ENCODE measurements at regions of chr12 and their contacts with region 1.

Region 1: DNA sequence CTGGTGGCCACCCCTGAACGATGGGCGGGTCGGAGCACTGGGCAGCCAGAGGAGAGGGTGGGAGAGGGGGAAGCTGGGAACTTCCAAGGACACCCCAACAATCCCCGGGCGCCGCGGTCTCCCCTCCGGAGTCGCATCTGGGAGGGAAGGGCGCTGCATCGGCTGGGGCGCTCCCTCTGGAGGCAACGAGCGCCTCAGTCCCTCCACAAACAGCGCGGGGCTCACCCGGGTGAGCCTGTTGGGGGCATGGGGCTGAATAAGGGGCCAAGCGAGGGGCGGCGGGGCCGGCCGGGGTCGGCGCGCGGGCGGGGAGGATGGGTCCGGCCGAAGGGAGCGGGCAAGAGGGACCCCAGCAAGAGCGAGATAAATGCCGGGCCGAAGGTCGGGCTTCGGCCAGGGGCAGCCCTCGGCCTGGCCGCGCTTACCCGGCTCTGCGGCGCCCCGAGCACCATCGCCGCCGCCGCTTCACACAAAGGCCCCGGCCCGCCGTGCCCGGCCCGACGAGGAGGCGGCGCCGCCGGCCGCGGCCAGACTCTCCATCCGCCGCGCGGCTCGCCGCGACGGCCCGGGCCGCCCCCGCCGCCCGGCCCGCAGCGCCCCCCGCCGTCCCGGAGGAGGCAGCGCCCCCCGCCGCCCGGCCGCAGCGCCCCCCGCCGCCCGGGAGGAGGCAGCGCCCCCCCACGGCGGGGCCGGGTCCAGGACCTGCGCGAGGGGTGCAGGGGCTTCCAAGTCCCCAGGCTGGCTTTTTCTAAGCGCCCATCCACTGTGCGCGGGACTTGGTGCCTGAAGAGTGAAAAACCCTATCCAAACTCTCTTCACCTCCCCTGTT is at the start of gene ZBTB39:
- H3K4me3 Mint-ChIP-seq: peak within 1 kb of the TSS; percentile 85
- H3K27ac Mint-ChIP-seq: peak within 1 kb of the TSS; percentile 89
- H3K4me1 Mint-ChIP-seq: peaks cover 49% of the 10 kb centered on the region
- H3K27me3 Mint-ChIP-seq: no peaks in the 10 kb centered on the region

Region 2: DNA sequence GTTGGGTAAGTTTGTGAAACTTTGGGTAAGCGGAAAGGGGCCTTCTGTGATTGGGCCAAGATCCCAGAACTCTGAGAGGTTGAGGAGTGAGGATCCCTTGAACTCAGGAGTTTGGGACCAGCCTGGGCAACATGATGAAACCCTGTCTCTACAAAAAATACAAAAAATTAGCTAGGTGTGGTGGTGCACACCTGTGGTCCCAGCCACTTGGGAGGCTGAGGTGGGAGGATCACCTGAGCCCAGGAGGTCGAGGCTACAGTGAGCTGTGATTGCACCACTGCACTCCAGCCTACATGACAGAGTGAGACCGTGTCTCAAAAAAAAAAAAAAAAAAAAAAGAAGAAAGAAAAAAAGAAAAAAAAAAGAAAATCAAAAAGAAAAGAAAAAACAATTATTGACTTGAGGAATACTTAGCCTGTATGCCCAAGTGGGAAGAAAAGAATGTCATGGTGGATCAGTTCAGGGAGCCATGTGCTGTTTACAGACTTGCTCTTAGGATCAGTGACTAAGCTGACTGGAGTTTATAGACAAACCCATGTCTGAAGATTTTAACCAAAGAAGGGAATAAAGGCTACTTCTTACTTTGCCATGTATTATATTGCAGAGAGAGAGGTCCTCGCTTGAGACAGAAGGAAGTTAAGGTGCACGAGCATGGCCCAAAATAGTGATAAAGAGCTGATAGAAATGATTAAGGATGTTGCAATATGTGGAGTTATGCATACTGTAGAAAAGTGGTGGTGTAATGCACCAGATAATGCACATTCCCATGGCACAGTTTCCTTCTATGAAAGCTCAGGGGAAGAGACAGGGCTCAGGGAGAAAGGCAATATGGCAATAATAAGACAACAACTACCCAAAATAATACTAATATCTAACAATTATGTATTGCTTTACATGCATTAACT is 242.2 kb before region 1 on chr12:
- intact Hi-C with region 1: loop called (anchors 1 kb)
- H3K4me3 Mint-ChIP-seq: no peak overlapping the region
- H3K27ac Mint-ChIP-seq: no peak overlapping the region
- H3K4me1 Mint-ChIP-seq: peaks cover 38% of the 10 kb centered on the region
- H3K27me3 Mint-ChIP-seq: peaks cover 3% of the 10 kb centered on the region

Region 3: GRCh38 chr12:56839915-56840325 is 166.3 kb before region 1 on chr12:
- intact Hi-C with region 1: loop called (anchors 1 kb)
- H3K4me3 Mint-ChIP-seq: no peak overlapping the region
- H3K27ac Mint-ChIP-seq: no peak overlapping the region
- H3K4me1 Mint-ChIP-seq: peaks cover 12% of the 10 kb centered on the region
- H3K27me3 Mint-ChIP-seq: peaks cover 19% of the 10 kb centered on the region

Region 4: GRCh38 chr12:57046947-57047890 is 41.0 kb after region 1 on chr12:
- intact Hi-C with region 1: loop called (anchors 5 kb)
- H3K4me3 Mint-ChIP-seq: peak overlapping the region; percentile 44
- H3K27ac Mint-ChIP-seq: peak overlapping the region; percentile 84
- H3K4me1 Mint-ChIP-seq: peaks cover 67% of the 10 kb centered on the region
- H3K27me3 Mint-ChIP-seq: peaks cover 7% of the 10 kb centered on the region

Region 5: GRCh38 chr12:57063991-57064685 is 57.9 kb after region 1 on chr12:
- intact Hi-C with region 1: loop called (anchors 1 kb)
- H3K4me3 Mint-ChIP-seq: peak overlapping the region; percentile 50
- H3K27ac Mint-ChIP-seq: peak overlapping the region; percentile 68
- H3K4me1 Mint-ChIP-seq: peaks cover 30% of the 10 kb centered on the region
- H3K27me3 Mint-ChIP-seq: no peaks in the 10 kb centered on the region

Region 6: GRCh38 chr12:57078519-57079404 is 72.6 kb after region 1 on chr12 and contains the start of gene NEMP1:
- intact Hi-C with region 1: no loop called
- H3K4me3 Mint-ChIP-seq: peak within 1 kb of the TSS; percentile 100
- H3K27ac Mint-ChIP-seq: peak within 1 kb of the TSS; percentile 99
- H3K4me1 Mint-ChIP-seq: peaks cover 26% of the 10 kb centered on the region
- H3K27me3 Mint-ChIP-seq: no peaks in the 10 kb centered on the region

Region 7: GRCh38 chr12:57111031-57111734 is 105.0 kb after region 1 on chr12 and contains the start of gene STAT6:
- intact Hi-C with region 1: loop called (anchors 5 kb)
- H3K4me3 Mint-ChIP-seq: peak within 1 kb of the TSS; percentile 98
- H3K27ac Mint-ChIP-seq: peak within 1 kb of the TSS; percentile 95
- H3K4me1 Mint-ChIP-seq: peaks cover 65% of the 10 kb centered on the region
- H3K27me3 Mint-ChIP-seq: peaks cover 1% of the 10 kb centered on the region

Measured in dendritic cell treated with granulocyte-macrophage colony-stimulating factor and Interleukin-4, amounts not matched to agents 40 ng/mL and 50 ng/mL, for 4 days (primary cell).